ENCODE measurements at regions of chr4 and their contacts with region 1.

Region 1: GRCh38 chr4:1746265-1746691 is 25.0 kb downstream of the TACC3 start:
- DNase-seq: peak; percentile 44
- H3K27ac ChIP-seq: peak overlapping the region; percentile 53
- CTCF ChIP-seq: peak; percentile 83

Region 2: DNA sequence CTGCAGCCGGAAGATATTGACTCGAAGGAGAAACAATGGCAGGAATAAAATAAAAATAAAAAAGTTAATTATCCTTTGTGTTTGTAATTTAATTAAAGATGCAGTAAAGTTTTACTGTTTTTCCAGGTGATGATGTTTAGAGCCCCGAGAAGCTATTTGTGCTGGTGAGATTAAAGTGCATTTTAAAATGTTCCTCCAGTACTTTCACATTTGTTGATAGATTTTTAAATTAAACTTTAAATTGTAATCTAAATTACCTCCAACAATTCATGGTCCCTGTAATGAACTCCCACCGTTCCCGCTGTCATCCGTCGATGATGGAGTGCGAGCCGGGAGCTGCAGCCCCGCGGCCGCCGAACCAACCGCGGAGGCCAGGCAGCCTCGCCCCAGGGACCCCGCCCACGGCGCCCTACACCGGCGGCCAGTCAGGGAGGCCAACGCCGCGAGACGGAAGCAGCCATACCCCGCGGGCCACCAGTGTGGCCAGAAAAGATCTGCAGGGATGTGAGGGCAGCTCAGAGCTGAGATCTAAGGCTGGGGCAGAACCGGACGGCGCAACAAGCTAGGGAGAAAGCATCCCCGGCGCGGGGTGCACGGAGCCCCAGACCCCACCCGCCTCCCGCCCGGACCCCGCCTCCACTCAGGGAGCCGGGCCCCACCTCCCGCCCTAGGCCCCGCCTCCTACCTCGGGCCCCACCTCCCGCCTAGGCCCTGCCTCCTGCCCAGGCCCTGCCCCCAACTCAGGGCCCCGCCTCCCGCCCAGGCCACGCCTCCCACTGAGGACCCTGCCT is 166.2 kb before region 1 on chr4:
- CTCF ChIA-PET with region 1: no interaction called
- POLR2A ChIA-PET with region 1: no interaction called
- DNase-seq: peak; percentile 83
- H3K27ac ChIP-seq: peak overlapping the region; percentile 81
- CTCF ChIP-seq: no peak

Region 3: DNA sequence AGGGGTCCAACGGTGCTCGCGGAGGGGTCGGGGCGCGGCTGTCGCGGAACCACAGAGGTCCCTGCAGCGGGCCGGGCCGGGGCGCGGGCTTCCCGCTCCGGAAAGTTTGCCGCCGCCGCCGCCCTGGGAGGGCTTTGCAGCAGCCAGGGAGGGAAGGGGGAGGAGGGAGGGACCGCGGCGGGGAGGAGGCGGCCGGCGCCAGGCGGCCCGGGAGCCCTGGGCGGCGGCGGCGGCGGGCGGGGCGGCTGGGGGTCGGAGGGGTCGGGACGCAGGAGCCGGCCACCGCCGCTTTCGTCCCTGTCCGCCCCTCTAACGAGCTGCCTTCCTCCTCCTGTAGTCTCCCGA is 47.2 kb after region 1 on chr4:
- CTCF ChIA-PET with region 1: interaction called, 12 read pairs
- POLR2A ChIA-PET with region 1: no interaction called
- DNase-seq: peak; percentile 28
- H3K27ac ChIP-seq: peak overlapping the region; percentile 91
- CTCF ChIP-seq: no peak

Region 4: GRCh38 chr4:1809754-1810511 is 63.7 kb after region 1 on chr4:
- CTCF ChIA-PET with region 1: interaction called, 56 read pairs
- POLR2A ChIA-PET with region 1: no interaction called
- DNase-seq: peak; percentile 51
- H3K27ac ChIP-seq: peak overlapping the region; percentile 91
- CTCF ChIP-seq: peak; percentile 94